ENCODE measurements at regions of chr2 and their contacts with region 1.

Region 1: GRCh38 chr2:219029829-219030165 is 11.5 kb downstream of the CFAP65 start:
- DNase-seq: peak; percentile 85
- H3K4me3 Mint-ChIP-seq: no peak overlapping the region
- H3K27ac Mint-ChIP-seq: no peak overlapping the region
- H3K4me1 Mint-ChIP-seq: no peaks in the 10 kb centered on the region
- H3K27me3 Mint-ChIP-seq: peaks cover 20% of the 10 kb centered on the region

Region 2: GRCh38 chr2:218979846-218980734 is 49.7 kb before region 1 on chr2:
- CTCF ChIA-PET with region 1: interaction called, 24 read pairs
- POLR2A ChIA-PET with region 1: no interaction called
- intact Hi-C with region 1: no loop called
- DNase-seq: peak; percentile 89
- H3K4me3 Mint-ChIP-seq: peak overlapping the region; percentile 52
- H3K27ac Mint-ChIP-seq: no peak overlapping the region
- H3K4me1 Mint-ChIP-seq: peaks cover 28% of the 10 kb centered on the region
- H3K27me3 Mint-ChIP-seq: peaks cover 62% of the 10 kb centered on the region

Region 3: GRCh38 chr2:219041252-219041651 is 11.5 kb after region 1 on chr2 and contains the start of gene CFAP65:
- CTCF ChIA-PET with region 1: interaction called, 22 read pairs
- POLR2A ChIA-PET with region 1: no interaction called
- intact Hi-C with region 1: no loop called
- DNase-seq: peak; percentile 52
- H3K4me3 Mint-ChIP-seq: peak within 1 kb of the TSS; percentile 55
- H3K27ac Mint-ChIP-seq: no peak within 1 kb of the TSS
- H3K4me1 Mint-ChIP-seq: peaks cover 10% of the 10 kb centered on the region
- H3K27me3 Mint-ChIP-seq: peaks cover 38% of the 10 kb centered on the region
- total RNA-seq, gene CFAP65: not detected

Region 4: DNA sequence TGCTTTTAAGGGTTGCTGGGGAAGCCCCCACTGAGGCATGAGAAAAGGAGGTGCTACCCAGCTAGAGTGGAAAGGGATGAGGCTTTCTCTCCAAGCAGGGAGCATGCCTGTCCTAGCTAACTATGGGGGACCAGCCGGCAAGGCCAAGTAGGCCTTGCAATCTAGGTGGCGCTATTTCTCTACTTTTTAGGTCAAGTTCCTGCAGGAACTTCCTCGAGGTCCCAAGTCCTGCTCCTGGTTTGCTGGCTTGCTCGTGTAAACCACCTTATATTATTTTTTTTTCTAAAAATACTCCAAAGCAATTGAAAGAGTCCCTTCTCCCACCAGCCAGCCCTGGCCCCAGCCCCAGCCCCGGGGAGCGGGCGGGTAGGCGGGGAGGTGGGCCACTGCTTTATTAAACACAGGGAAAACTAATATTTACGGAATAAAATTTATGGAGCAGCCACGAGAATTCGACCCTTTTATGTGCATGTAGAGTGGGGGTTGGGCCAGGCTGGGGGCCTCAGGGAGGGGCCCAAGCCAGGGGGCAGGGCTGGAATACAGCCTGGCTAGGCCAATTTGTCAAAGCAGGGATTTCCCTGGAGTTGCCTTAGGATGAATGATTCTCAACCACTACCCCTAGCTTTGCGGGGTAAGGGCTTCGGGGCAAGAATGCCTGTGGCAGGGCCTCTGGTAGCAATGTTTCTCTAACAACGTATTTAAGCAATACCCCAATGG is 43.8 kb after region 1 on chr2:
- CTCF ChIA-PET with region 1: interaction called, 10 read pairs
- POLR2A ChIA-PET with region 1: no interaction called
- intact Hi-C with region 1: no loop called
- DNase-seq: peak; percentile 25
- H3K4me3 Mint-ChIP-seq: no peak overlapping the region
- H3K27ac Mint-ChIP-seq: no peak overlapping the region
- H3K4me1 Mint-ChIP-seq: no peaks in the 10 kb centered on the region
- H3K27me3 Mint-ChIP-seq: no peaks in the 10 kb centered on the region

Region 5: GRCh38 chr2:219149667-219150066 is 119.9 kb after region 1 on chr2:
- CTCF ChIA-PET with region 1: interaction called, 48 read pairs
- POLR2A ChIA-PET with region 1: no interaction called
- intact Hi-C with region 1: no loop called
- DNase-seq: no peak
- H3K4me3 Mint-ChIP-seq: no peak overlapping the region
- H3K27ac Mint-ChIP-seq: no peak overlapping the region
- H3K4me1 Mint-ChIP-seq: no peaks in the 10 kb centered on the region
- H3K27me3 Mint-ChIP-seq: no peaks in the 10 kb centered on the region

Region 6: GRCh38 chr2:219206442-219207253 is 176.9 kb after region 1 on chr2 and contains the start of gene ZFAND2B:
- CTCF ChIA-PET with region 1: no interaction called
- POLR2A ChIA-PET with region 1: no interaction called
- intact Hi-C with region 1: no loop called
- DNase-seq: peak; percentile 95
- H3K4me3 Mint-ChIP-seq: peak within 1 kb of the TSS; percentile 94
- H3K27ac Mint-ChIP-seq: peak within 1 kb of the TSS; percentile 99
- H3K4me1 Mint-ChIP-seq: peaks cover 32% of the 10 kb centered on the region
- H3K27me3 Mint-ChIP-seq: no peaks in the 10 kb centered on the region
- total RNA-seq, gene ZFAND2B: 31.9 to 34.4 TPM

Measured in activated CD4-positive, alpha-beta memory T cell treated with anti-CD3 and anti-CD28 coated beads for 36 hours (primary cell).